ENCODE measurements at regions of chr11 and their contacts with region 1.

Region 1: DNA sequence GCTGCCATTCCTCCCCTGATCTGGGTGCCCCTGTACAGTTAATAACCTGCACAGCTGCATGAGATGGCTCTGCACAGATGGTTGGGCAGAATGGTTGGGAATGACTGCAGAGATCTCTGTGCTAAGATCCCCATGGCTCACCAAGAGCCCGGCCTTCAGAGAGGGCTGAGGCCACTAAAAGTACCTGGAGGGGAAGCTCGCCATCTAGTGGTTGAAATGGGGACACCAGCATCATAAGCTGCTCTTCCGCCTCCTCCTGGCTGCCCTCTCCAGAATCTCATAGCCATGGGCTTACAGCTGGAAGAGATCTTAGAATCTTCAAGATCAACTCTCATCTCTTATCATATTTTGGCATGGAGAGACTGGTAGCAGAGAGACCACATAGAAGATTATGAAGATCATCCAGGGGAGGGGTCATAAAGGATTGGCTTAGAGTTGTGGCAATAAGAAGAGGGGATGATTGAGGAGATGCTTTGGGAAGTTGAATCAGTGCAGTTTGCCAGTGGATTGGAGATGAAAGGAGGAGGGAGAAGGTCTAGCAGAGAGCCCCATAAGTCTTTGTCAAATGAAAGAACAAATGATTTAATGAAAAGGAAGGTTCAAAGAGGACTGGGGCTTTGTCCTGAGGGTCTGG is 22.0 kb upstream of the TLCD5 start:
- DNase-seq: peak; percentile 63
- ATAC-seq: peak; percentile 86

Region 2: GRCh38 chr11:120172054-120172911 is 130.8 kb before region 1 on chr11:
- intact Hi-C with region 1: loop called (anchors 2 kb)
- DNase-seq: peak; percentile 80
- ATAC-seq: peak; percentile 71

Region 3: DNA sequence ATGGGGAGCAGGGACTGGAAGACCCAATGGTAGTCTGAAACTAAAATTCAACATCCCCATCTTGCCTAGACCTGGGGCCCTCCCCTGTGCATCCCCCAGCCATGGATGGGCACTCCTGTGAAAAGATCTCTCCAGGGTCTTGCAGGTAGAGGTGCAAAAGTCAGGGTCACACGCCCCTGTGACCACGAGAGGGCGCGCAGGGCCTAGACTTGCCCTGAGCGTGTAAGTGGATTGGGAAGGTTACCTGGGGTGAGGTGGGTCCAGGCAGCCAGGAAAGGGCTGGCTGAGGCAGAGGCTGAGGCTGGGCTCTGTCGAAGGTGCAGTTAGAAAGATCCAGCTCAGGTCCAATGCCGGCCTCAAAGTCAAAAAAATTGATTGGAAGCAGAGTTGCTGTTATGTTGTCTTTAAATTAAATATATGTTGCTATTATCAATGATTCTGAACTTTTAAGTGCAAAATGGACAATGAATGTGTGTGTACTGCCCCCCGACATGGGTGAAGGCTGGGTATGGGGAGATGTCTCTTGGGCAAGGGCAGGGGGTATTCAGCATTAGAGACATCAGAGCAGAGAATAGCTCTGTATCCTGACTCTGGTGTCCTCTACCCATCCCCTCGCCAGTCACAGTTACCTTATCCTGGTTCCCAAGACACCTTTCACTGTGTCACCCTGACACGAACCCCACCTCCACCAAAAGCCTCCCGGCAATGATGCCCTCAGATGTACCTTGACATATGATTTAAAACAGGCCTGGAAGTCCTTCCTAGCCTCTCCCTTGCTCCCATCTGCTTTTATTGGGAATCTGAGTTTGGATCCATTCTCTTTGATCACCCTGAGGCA is 67.9 kb before region 1 on chr11:
- intact Hi-C with region 1: loop called (anchors 2 kb)
- DNase-seq: peak; percentile 77
- ATAC-seq: peak; percentile 86